AG04450 (cell line): ENCODE measurements at regions of chr4 and their contacts with region 1.

Region 1: GRCh38 chr4:107757864-107758476 is 37.9 kb upstream of the PAPSS1 start:
- DNase-seq: peak; percentile 6
- H3K4me3 ChIP-seq: no peak overlapping the region
- H3K27ac ChIP-seq: no peak overlapping the region
- H3K27me3 ChIP-seq: peaks cover 12% of the 10 kb centered on the region
- CTCF ChIP-seq: peak; percentile 50

Region 2: DNA sequence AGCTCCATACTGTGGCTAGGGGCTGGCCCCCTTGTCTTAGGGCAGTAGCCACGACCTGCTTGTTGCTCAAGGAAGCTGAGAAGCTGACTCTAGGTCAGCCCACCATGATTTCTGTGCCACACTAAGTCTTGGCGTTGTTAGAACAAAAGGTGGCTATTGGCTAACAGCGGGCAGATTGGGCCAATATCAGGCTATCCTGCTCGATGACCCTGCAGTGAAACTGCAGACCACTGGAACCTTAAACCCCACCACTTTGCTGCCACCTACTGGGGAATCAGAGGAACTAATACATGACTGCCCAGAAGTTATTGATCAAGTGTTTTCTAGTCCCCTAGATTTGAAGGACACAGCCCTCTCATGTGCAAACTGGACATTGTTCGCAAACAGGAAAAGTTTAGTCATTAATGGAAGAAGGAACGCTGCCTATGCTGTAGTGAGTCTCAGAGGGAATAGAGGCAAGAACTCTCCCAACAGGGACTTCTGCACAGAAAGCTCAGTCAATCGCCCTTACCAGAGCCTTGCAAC is 21.0 kb before region 1 on chr4:
- CTCF ChIA-PET with region 1: interaction called, 13 read pairs
- POLR2A ChIA-PET with region 1: no interaction called
- DNase-seq: no peak
- H3K4me3 ChIP-seq: no peak overlapping the region
- H3K27ac ChIP-seq: no peak overlapping the region
- H3K27me3 ChIP-seq: peaks cover 5% of the 10 kb centered on the region
- CTCF ChIP-seq: peak; percentile 84

Region 3: DNA sequence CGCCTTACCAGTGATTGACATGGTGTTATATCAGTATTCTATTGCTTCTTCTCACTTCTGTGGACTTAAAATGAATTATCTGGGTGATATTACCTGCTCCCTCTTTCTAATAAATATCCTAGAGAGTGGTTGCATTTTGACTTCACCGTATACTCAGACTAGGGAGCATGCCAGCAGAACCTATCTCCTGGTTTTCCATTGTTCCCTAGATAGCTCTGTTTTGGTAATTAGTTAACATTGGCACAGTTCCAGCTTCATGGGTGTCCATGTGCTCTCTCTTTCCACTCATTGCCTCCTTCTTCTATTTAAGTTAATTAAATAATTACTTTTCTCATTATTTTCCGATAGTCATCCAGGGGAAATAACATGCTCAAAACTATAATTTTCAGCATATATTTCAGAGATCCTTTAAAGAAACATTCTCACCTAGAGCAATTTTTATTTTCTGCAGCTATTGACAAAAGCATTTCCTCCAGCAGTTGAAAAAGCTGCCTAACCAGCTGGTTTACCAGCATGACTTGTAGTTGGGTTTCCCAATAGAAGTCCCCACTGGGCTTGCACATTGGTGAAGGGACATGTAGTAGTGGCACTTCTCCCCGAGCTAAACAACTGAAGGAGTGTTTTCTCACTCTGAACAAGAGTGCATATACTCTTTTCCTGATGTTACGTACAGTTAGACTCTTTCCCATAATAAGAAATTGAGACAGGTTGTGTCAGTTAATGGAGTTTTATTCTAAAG is 10.1 kb before region 1 on chr4:
- CTCF ChIA-PET with region 1: interaction called, 11 read pairs
- POLR2A ChIA-PET with region 1: no interaction called
- DNase-seq: no peak
- H3K4me3 ChIP-seq: no peak overlapping the region
- H3K27ac ChIP-seq: no peak overlapping the region
- H3K27me3 ChIP-seq: no peaks in the 10 kb centered on the region
- CTCF ChIP-seq: no peak

Region 4: DNA sequence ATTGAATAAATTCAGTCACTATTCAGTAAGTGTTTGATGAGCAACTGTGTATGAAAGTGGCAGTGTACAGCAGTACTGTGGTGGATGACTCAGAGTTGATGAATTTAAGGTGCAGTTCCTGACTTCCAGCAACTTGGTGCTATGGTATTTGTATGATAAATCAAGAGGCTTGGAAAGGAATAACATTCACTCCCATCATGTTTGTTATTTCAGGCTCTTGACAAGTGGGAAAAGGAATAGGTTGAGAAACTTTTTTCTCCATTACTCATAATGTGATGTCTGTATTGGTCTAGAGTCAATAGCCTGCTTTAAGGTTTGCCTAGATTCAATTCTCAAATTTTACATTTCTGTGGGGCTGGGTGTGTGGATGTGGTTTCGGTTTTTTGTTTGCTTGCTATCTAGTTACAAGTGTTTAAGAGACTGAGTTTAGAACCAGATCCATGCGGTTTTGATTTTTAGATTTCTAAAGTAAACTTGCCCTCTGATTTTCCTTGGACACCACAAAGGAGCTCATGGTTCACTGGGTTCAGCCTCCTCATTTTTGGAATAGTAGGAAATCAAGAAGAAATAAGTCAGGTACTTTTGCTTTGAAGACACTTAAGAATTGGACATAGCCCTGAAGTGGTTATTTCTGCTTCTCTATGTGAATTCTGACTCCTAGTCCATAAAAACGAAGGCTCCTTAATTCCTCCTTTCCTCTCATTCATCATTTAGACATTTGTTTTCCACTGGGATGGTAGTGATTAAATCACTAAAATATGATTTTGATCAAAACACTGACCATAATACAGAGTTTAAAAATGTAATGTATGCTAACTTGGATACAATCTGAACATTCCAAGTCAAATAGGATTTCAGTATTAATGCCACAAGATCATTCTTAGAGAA is 138.4 kb after region 1 on chr4:
- CTCF ChIA-PET with region 1: interaction called, 13 read pairs
- POLR2A ChIA-PET with region 1: no interaction called
- DNase-seq: peak; percentile 83
- H3K4me3 ChIP-seq: no peak overlapping the region
- H3K27ac ChIP-seq: no peak overlapping the region
- H3K27me3 ChIP-seq: no peaks in the 10 kb centered on the region
- CTCF ChIP-seq: no peak

Region 5: GRCh38 chr4:107902715-107903114 is 144.7 kb after region 1 on chr4:
- CTCF ChIA-PET with region 1: interaction called, 13 read pairs
- POLR2A ChIA-PET with region 1: no interaction called
- DNase-seq: no peak
- H3K4me3 ChIP-seq: no peak overlapping the region
- H3K27ac ChIP-seq: no peak overlapping the region
- H3K27me3 ChIP-seq: no peaks in the 10 kb centered on the region
- CTCF ChIP-seq: no peak

Region 6: GRCh38 chr4:107913281-107913899 is 155.4 kb after region 1 on chr4:
- CTCF ChIA-PET with region 1: interaction called, 79 read pairs
- POLR2A ChIA-PET with region 1: no interaction called
- DNase-seq: peak; percentile 50
- H3K4me3 ChIP-seq: no peak overlapping the region
- H3K27ac ChIP-seq: no peak overlapping the region
- H3K27me3 ChIP-seq: no peaks in the 10 kb centered on the region
- CTCF ChIP-seq: peak; percentile 74